ENCODE measurements at regions of chr1 and their contacts with region 1.

Region 1: DNA sequence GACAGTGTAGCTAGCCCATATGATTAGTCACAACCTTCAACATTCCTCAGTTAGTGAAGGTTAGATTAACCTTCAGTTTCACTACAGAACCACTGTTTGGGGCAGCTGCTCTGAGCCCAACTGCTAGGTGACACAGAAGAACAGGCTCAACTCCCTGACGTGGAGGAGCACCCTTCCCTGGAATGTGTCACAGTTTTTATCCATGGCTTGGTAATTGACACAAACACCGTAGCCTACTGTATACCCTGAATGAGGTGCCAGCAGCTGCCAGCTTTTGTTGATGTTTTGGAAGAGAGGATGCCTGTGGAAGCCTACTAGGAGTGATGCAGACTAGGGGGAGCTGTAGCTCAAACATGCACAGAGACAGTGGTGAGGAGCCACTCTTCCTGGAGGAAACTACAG is 56.6 kb upstream of the CR2 start:
- DNase-seq: no peak
- ATAC-seq: no peak
- H3K4me3 Mint-ChIP-seq: no peak overlapping the region
- H3K27ac Mint-ChIP-seq: no peak overlapping the region
- H3K4me1 Mint-ChIP-seq: peaks cover 5% of the 10 kb centered on the region
- H3K27me3 Mint-ChIP-seq: no peaks in the 10 kb centered on the region
- CTCF ChIP-seq: no peak

Region 2: DNA sequence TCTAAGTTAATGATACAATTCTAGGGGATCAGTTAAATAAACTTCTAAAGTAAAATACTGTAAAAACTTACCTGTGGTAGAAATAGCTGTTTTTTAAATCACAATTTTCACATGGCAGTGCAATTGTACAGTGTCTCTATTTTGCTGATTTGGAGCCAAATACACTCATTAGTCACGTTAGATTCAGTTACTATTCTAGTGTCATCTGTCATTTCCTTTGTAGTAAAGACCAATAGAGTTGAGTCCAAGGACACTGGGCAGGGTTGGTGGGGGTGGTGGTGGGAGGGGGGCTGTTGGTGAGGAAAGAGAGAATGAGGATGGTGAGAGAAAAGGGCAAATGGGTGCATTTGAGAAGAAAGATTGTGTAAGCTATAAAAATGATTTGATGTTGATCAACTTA is 42.5 kb before region 1 on chr1:
- CTCF ChIA-PET with region 1: no interaction called
- POLR2A ChIA-PET with region 1: no interaction called
- intact Hi-C with region 1: loop called (anchors 5 kb)
- DNase-seq: no peak
- ATAC-seq: no peak
- H3K4me3 Mint-ChIP-seq: no peak overlapping the region
- H3K27ac Mint-ChIP-seq: peak overlapping the region; percentile 35
- H3K4me1 Mint-ChIP-seq: peaks cover 66% of the 10 kb centered on the region
- H3K27me3 Mint-ChIP-seq: no peaks in the 10 kb centered on the region
- CTCF ChIP-seq: no peak

Region 3: DNA sequence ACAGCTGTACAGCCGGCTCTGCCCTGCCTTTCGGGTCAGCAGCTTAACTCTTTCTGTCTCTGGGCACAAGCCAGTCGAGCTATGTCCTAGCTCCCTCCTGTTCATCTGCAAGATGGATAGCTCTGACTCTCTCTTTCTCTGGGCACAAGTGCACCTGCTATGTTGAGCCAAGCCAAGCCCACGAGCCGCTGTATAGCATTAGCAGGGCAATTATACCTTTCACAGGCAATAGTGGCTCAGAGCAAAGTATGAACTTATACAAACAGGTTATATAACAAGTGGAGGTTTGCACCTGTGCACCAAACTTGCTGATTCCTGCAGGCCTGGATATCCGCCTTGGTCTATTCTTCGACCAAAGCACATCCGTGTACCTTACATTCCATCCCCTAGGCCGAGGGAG is 23.6 kb after region 1 on chr1:
- CTCF ChIA-PET with region 1: no interaction called
- POLR2A ChIA-PET with region 1: no interaction called
- intact Hi-C with region 1: no loop called
- DNase-seq: no peak
- ATAC-seq: no peak
- H3K4me3 Mint-ChIP-seq: no peak overlapping the region
- H3K27ac Mint-ChIP-seq: no peak overlapping the region
- H3K4me1 Mint-ChIP-seq: peaks cover 64% of the 10 kb centered on the region
- H3K27me3 Mint-ChIP-seq: no peaks in the 10 kb centered on the region
- CTCF ChIP-seq: no peak